ENCODE measurements at regions of chr1 and their contacts with region 1.

Region 1: GRCh38 chr1:236113324-236114032 is 28.9 kb upstream of the GPR137B start:
- DNase-seq: no peak
- H3K4me3 ChIP-seq: no peak overlapping the region
- CTCF ChIP-seq: no peak
- POLR2A ChIP-seq: no peak

Region 2: DNA sequence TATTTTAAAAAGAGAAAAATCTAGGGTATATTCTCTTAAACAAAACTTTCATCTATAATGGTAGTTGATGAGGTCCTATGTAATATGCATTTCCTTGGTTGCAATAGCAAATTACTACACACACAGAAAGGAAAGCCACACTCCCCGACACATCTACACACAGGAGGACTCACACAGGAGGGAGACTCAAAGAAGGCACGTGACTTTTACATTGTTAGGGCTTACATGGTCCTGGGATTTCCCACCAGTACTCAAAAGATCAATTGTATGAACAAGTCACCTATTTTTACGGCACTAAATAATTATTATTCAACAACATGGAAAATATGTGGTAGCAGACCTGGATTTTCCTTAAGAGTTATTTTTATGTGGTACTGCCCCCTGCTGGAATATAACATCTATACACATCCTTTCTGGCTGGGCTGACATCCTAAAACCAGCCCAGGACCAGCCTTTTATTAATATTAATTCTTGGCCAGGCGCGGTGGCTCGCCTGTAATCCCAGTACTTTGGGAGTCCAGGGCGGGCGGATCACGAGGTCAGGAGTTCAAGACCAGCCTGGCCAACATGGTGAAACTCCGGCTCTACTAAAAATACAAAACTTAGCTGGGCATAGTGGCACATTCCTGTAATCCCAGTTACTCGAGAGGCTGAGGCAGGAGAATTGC is 376.4 kb after region 1 on chr1:
- intact Hi-C with region 1: loop called (anchors 5 kb)
- DNase-seq: no peak
- H3K4me3 ChIP-seq: no peak overlapping the region
- CTCF ChIP-seq: no peak
- POLR2A ChIP-seq: no peak